HEK293 (cell line): ENCODE measurements at regions of chr17 and their contacts with region 1.

Region 1: DNA sequence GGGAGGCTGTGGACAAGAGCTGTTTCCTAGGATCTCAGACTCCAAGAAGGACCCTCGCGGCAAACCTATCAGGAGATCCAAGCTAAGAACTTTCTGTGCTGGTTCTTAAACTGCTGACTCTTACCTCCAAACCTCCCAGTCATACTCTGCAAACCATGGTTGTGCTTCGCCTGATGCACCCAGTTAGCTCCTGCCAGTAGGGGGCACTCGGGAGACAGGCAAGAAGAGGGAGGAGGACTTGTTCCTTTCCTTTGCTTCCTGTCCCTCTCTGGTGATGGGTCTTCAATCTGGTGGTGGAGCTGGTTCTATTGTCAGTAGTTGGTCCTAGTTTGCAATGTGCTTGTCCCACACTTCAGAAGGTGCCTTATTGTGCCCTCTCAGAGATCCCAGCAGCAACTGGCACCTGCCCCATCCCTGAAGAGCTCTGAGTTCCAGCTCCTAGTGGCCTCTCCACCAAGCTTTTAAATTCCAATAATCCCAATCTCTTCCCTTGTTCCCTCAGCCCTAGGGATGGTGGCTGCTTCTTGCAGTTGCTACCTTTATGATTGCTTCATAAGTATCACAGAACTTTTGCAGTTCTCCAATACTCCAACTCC is 113.5 kb upstream of the RPL38 start:
- H3K4me3 ChIP-seq: no peak overlapping the region
- H3K27ac ChIP-seq: no peak overlapping the region
- H3K4me1 ChIP-seq: no peaks in the 10 kb centered on the region
- CTCF ChIP-seq: peak; percentile 42; the same call in 1 of the 2 replicates

Region 2: DNA sequence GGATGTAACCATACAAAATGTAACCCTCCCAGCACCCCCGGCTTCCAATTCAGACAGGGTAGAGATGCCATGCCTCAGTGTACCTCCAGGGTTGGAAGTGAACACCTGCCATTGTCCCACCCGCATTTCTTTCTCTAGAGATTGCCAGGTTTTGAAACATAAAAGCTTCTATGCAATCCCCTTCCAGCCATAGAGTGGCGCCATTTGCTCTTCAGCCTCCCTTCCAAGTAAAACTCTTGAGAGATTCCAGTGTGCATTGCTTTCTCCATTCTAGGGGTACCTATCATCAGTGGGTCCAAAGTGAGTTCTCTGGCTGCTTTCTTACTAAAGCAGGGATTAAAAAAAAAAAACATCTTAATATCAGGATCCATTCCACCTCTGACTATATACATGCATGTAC is 19.6 kb before region 1 on chr17:
- CTCF ChIA-PET with region 1: interaction called, 13 read pairs
- POLR2A ChIA-PET with region 1: no interaction called
- H3K4me3 ChIP-seq: no peak overlapping the region
- H3K27ac ChIP-seq: no peak overlapping the region
- H3K4me1 ChIP-seq: no peaks in the 10 kb centered on the region
- CTCF ChIP-seq: no peak

Region 3: DNA sequence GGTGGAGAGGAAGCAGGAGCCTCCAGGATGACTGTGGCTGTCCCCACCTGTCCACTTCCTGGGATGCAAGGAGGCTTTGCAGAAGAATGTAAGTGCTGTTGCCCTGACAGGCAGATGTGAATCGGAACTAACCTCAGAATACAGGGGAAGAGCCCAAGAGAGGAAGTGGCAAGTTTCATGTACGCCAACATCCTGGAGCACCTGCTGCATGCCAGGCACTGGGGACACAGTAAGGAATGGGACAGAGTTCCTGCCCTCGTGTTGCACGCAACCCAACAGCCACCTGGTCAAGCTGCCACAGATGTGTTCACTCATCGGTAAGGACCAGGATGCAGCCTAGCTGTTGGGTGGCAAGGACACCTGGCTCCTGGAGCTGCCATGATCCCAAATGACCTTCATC is 15.0 kb after region 1 on chr17:
- CTCF ChIA-PET with region 1: interaction called, 24 read pairs
- POLR2A ChIA-PET with region 1: no interaction called
- H3K4me3 ChIP-seq: no peak overlapping the region
- H3K27ac ChIP-seq: no peak overlapping the region
- H3K4me1 ChIP-seq: no peaks in the 10 kb centered on the region
- CTCF ChIP-seq: no peak

Region 4: GRCh38 chr17:74118504-74118903 is 28.5 kb after region 1 on chr17:
- CTCF ChIA-PET with region 1: interaction called, 13 read pairs
- POLR2A ChIA-PET with region 1: no interaction called
- H3K4me3 ChIP-seq: no peak overlapping the region
- H3K27ac ChIP-seq: no peak overlapping the region
- H3K4me1 ChIP-seq: no peaks in the 10 kb centered on the region
- CTCF ChIP-seq: no peak

Region 5: GRCh38 chr17:74176546-74177001 is 86.6 kb after region 1 on chr17:
- CTCF ChIA-PET with region 1: interaction called, 78 read pairs
- POLR2A ChIA-PET with region 1: no interaction called
- H3K4me3 ChIP-seq: no peak overlapping the region
- H3K27ac ChIP-seq: no peak overlapping the region
- H3K4me1 ChIP-seq: no peaks in the 10 kb centered on the region; the same call in 1 of the 2 replicates
- CTCF ChIP-seq: peak; percentile 74

Region 6: DNA sequence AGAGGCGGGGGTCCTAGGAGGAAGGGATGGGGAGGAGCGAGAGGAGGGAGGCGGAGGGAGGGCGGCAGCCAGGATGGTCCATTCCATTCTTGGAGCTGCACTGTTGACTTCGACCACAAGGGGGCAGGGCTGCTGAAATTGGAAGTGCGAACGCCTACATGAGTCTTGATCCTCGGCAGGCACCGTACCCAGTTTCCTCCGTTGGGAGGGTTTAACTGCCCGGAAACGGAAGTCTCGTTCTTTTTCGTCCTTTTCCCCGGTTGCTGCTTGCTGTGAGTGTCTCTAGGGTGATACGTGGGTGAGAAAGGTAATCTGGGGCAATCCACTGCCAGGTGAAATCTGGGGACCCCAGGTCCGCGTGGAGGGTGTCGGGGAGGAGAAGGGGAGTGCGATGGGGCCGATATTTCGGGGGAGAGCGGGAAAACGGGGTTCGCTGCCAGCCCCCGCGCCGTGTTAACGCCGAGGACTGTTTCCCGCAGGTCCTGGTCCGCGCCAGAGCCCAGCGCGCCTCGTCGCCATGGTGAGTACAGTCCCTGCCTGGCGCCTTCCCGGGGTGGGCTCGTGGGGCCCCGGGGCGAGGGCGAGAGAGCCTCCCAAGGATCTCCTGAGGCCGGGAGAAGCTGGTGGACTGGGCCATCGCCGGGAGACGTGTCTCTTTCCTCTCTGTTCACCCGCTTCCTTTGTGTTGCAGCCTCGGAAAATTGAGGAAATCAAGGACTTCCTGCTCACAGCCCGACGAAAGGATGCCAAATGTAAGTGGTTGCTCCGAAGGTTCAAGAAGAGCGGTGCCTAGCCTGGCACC is 113.7 kb after region 1 on chr17 and contains the start of gene RPL38:
- CTCF ChIA-PET with region 1: interaction called, 74 read pairs
- POLR2A ChIA-PET with region 1: interaction called, 6 read pairs
- H3K4me3 ChIP-seq: peak within 1 kb of the TSS; percentile 96
- H3K27ac ChIP-seq: peak within 1 kb of the TSS; percentile 98
- H3K4me1 ChIP-seq: peaks cover 12% of the 10 kb centered on the region; the same call in 1 of the 2 replicates
- CTCF ChIP-seq: peak; percentile 99